GM12878 (cell line): ENCODE measurements at regions of chr7 and their contacts with region 1.

Region 1: DNA sequence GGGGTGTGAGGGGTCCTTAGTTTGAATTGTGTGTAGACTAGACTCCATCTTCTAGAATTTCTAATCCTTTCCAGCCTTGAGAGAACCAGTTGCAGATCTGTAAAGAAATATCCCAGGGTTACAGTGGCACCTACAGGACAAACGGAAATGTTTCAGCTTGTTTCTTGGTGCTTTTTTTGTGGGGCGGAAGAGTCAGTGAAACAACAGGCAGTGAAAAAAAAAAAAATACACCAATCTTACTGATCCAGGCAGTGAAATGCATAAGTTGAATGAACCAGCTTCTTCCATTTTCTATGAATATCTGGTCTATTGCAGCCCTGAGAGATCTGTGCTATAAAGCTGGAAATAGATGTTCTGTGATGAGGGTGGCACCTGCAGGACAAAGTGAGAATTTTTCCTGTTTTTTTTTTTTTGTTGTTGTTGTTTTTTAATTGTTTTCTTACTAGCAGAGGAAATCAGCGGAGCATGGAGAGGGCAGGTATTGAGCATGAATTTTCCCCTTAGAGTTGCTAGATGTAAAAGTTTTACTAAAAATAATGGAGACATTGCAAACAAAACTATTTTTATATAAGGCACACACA is 81.9 kb upstream of the DYNC1I1 start:
- DNase-seq: peak; percentile 8
- ATAC-seq: peak; percentile 84
- H3K4me3 ChIP-seq: no peak overlapping the region
- H3K27ac ChIP-seq: no peak overlapping the region
- H3K4me1 ChIP-seq: no peaks in the 10 kb centered on the region
- H3K27me3 ChIP-seq: no peaks in the 10 kb centered on the region
- CTCF ChIP-seq: peak; percentile 26 to 44 (median 34); a peak in 5 of 6 replicates
- EP300 ChIP-seq: no peak
- POLR2A ChIP-seq: no peak
- RAD21 ChIP-seq: peak; percentile 44

Region 2: GRCh38 chr7:94436018-94436604 is 1254.3 kb before region 1 on chr7:
- CTCF ChIA-PET with region 1: no interaction called
- POLR2A ChIA-PET with region 1: no interaction called
- RAD21 ChIA-PET with region 1: no interaction called
- SMC1A ChIA-PET with region 1: no interaction called
- in situ Hi-C with region 1: loop called (anchors 25 kb)
- intact Hi-C with region 1: no loop called
- DNase-seq: peak; percentile 7
- ATAC-seq: peak; percentile 98
- H3K4me3 ChIP-seq: no peak overlapping the region
- H3K27ac ChIP-seq: no peak overlapping the region
- H3K4me1 ChIP-seq: no peaks in the 10 kb centered on the region
- H3K27me3 ChIP-seq: no peaks in the 10 kb centered on the region; a peak in 1 of 4 replicates
- CTCF ChIP-seq: peak; percentile 75 to 83 (median 76); a peak in 5 of 6 replicates
- EP300 ChIP-seq: no peak
- POLR2A ChIP-seq: no peak
- RAD21 ChIP-seq: peak; percentile 58

Region 3: GRCh38 chr7:95190515-95190914 is 499.9 kb before region 1 on chr7:
- CTCF ChIA-PET with region 1: interaction called, 16 read pairs
- POLR2A ChIA-PET with region 1: no interaction called
- RAD21 ChIA-PET with region 1: interaction called, 4 read pairs
- SMC1A ChIA-PET with region 1: interaction called, 4 read pairs
- in situ Hi-C with region 1: no loop called
- intact Hi-C with region 1: loop called (anchors 5 kb)
- DNase-seq: no peak
- ATAC-seq: peak; percentile 68
- H3K4me3 ChIP-seq: no peak overlapping the region
- H3K27ac ChIP-seq: no peak overlapping the region
- H3K4me1 ChIP-seq: no peaks in the 10 kb centered on the region
- H3K27me3 ChIP-seq: no peaks in the 10 kb centered on the region
- CTCF ChIP-seq: peak; percentile 24 to 39 (median 34); a peak in 3 of 6 replicates
- EP300 ChIP-seq: no peak
- POLR2A ChIP-seq: no peak
- RAD21 ChIP-seq: peak; percentile 45; the same call in 1 of the 2 replicates

Region 4: GRCh38 chr7:95501261-95501832 is 189.1 kb before region 1 on chr7:
- CTCF ChIA-PET with region 1: interaction called, 25 read pairs
- POLR2A ChIA-PET with region 1: no interaction called
- RAD21 ChIA-PET with region 1: interaction called, 288 read pairs
- SMC1A ChIA-PET with region 1: interaction called, 12 read pairs
- in situ Hi-C with region 1: no loop called
- intact Hi-C with region 1: no loop called
- DNase-seq: peak; percentile 87
- ATAC-seq: peak; percentile 78
- H3K4me3 ChIP-seq: peak overlapping the region; percentile 34; the same call in 1 of the 2 replicates
- H3K27ac ChIP-seq: peak overlapping the region; percentile 56
- H3K4me1 ChIP-seq: peaks cover 8% of the 10 kb centered on the region
- H3K27me3 ChIP-seq: no peaks in the 10 kb centered on the region
- CTCF ChIP-seq: no peak
- EP300 ChIP-seq: peak; percentile 96 to 97
- POLR2A ChIP-seq: no peak
- RAD21 ChIP-seq: no peak

Region 5: DNA sequence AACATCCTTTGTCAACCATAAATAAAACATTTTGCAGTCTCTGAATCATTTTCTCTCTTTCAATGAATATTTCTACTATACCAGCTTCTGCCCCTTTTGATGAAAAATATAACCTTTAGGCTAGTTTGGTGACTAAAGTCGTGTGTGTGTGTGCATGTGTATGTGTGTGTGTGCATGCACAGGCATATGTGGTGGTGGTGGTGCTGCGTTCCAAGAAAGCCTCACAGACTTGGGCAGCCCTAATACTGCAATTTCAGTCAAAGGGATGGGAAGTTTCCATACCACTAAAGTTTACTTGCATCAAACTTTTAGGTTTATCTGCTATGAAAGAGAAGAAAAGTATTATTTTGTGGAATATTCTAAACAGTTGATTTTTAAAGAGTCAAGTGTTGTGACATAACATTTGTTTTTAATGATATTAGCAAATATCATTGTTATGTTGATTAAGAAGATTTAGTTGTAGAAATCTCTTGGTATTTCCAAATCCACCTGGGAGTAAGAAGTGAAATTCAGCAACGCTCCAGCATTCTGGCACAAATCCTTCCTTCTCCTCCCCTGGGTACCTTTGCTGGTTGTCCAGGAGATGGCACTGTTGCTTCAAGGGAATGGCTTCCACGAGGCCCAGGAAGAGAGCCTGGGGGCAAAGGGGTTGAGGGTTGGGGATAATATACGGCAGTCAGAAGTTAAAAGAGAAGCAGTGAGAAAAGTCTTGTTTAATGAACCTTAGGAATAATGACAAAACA is 163.3 kb before region 1 on chr7:
- CTCF ChIA-PET with region 1: interaction called, 655 read pairs
- POLR2A ChIA-PET with region 1: interaction called, 3 read pairs
- RAD21 ChIA-PET with region 1: interaction called, 207 read pairs
- SMC1A ChIA-PET with region 1: interaction called, 448 read pairs
- in situ Hi-C with region 1: no loop called
- intact Hi-C with region 1: loop called (anchors 1 kb)
- DNase-seq: no peak
- ATAC-seq: peak; percentile 92
- H3K4me3 ChIP-seq: no peak overlapping the region
- H3K27ac ChIP-seq: no peak overlapping the region
- H3K4me1 ChIP-seq: no peaks in the 10 kb centered on the region
- H3K27me3 ChIP-seq: no peaks in the 10 kb centered on the region
- CTCF ChIP-seq: peak; percentile 73 to 83 (median 82)
- EP300 ChIP-seq: no peak
- POLR2A ChIP-seq: no peak
- RAD21 ChIP-seq: peak; percentile 96

Region 6: GRCh38 chr7:95593343-95593742 is 97.1 kb before region 1 on chr7:
- CTCF ChIA-PET with region 1: no interaction called
- POLR2A ChIA-PET with region 1: no interaction called
- RAD21 ChIA-PET with region 1: no interaction called
- SMC1A ChIA-PET with region 1: no interaction called
- in situ Hi-C with region 1: no loop called
- intact Hi-C with region 1: no loop called
- DNase-seq: no peak
- ATAC-seq: no peak
- H3K4me3 ChIP-seq: no peak overlapping the region
- H3K27ac ChIP-seq: no peak overlapping the region
- H3K4me1 ChIP-seq: no peaks in the 10 kb centered on the region
- H3K27me3 ChIP-seq: peaks cover 2 to 5% of the 10 kb centered on the region in 2 experiments; a peak in 3 of 4 replicates
- CTCF ChIP-seq: no peak
- EP300 ChIP-seq: no peak
- POLR2A ChIP-seq: no peak
- RAD21 ChIP-seq: no peak

Region 7: DNA sequence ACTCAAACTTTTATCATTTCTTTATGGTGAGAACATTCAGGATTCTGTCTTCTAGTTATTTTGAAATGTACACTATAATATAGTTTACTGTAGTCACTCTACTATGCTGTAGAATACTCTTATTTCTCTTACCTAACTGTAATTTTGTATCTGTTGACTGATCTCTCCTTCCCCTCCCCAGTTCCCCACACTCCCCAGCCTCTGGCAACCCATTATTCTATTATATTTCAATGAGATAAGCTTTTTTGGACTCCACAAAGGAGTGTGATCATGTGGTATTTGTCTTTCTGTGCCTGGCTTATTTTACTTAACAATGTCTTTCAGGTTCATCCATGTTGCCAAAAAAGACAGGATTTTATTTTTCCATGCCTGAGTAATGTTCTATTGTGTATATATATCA is 10.5 kb after region 1 on chr7:
- CTCF ChIA-PET with region 1: interaction called, 12 read pairs
- POLR2A ChIA-PET with region 1: interaction called, 3 read pairs
- RAD21 ChIA-PET with region 1: interaction called, 5 read pairs
- SMC1A ChIA-PET with region 1: interaction called, 16 read pairs
- in situ Hi-C with region 1: no loop called
- intact Hi-C with region 1: no loop called
- DNase-seq: no peak
- ATAC-seq: no peak
- H3K4me3 ChIP-seq: no peak overlapping the region
- H3K27ac ChIP-seq: no peak overlapping the region
- H3K4me1 ChIP-seq: no peaks in the 10 kb centered on the region
- H3K27me3 ChIP-seq: no peaks in the 10 kb centered on the region
- CTCF ChIP-seq: no peak
- EP300 ChIP-seq: no peak
- POLR2A ChIP-seq: no peak
- RAD21 ChIP-seq: no peak

Region 8: DNA sequence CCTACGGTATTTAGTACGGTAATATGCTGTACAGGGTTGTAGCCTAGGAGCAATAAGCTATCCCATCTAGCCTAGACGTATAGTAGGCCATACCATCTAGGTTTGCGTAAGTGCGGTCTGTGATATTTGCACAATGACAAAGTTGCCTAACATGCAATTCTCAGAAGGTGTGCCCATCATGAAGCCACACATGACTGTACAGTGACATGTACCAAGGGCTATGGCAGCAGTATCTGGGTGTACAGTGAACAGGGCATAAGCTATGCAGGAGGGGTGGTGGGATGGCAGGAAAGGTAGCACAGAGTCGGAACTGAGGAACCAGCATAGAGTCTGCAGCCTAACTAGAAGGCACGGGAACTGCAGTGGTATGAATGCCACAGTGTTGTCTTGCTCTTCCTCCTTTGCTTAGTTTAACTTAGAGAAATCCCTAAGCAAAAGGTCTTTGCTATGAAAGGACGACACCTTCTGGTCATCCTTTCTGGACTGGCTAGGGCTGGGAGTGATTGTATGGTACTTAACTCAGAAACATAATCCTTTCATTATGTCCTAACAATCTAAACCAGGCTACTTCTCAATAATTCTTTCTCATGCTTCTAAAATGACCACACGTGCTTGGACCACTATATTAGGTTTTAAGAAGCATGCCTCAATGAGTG is 175.4 kb after region 1 on chr7:
- CTCF ChIA-PET with region 1: interaction called, 47 read pairs
- POLR2A ChIA-PET with region 1: no interaction called
- RAD21 ChIA-PET with region 1: interaction called, 29 read pairs
- SMC1A ChIA-PET with region 1: interaction called, 13 read pairs
- in situ Hi-C with region 1: no loop called
- intact Hi-C with region 1: no loop called
- DNase-seq: no peak
- ATAC-seq: peak; percentile 46
- H3K4me3 ChIP-seq: no peak overlapping the region
- H3K27ac ChIP-seq: no peak overlapping the region
- H3K4me1 ChIP-seq: no peaks in the 10 kb centered on the region
- H3K27me3 ChIP-seq: no peaks in the 10 kb centered on the region
- CTCF ChIP-seq: peak in 1 of 3 experiments; percentile 34; a peak in 1 of 6 replicates
- EP300 ChIP-seq: no peak
- POLR2A ChIP-seq: no peak
- RAD21 ChIP-seq: no peak

Region 9: DNA sequence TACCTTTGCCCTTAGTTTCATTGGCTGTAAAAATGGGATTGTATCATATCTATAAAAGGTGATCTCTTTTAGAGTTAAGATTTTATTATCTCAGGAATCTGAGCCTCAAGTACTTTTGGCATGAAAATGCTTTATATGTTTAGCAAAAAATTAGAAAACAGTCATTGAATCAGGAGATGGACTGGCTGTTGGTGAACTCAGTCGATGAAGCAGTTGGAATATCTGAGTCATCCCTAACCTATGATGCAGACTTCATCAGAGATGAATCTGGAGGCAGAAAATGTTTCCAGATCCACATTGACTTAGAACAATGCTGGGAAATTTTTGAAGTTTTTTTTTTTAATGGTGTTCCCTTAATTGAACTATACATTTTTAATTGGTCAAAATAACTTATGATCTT is 403.0 kb after region 1 on chr7:
- CTCF ChIA-PET with region 1: no interaction called
- POLR2A ChIA-PET with region 1: no interaction called
- RAD21 ChIA-PET with region 1: no interaction called
- SMC1A ChIA-PET with region 1: no interaction called
- in situ Hi-C with region 1: no loop called
- intact Hi-C with region 1: no loop called
- DNase-seq: no peak
- ATAC-seq: no peak
- H3K4me3 ChIP-seq: no peak overlapping the region
- H3K27ac ChIP-seq: no peak overlapping the region
- H3K4me1 ChIP-seq: no peaks in the 10 kb centered on the region
- H3K27me3 ChIP-seq: no peaks in the 10 kb centered on the region
- CTCF ChIP-seq: no peak
- EP300 ChIP-seq: no peak
- POLR2A ChIP-seq: no peak
- RAD21 ChIP-seq: no peak